ENCODE measurements at regions of chr16 and their contacts with region 1.

Region 1: DNA sequence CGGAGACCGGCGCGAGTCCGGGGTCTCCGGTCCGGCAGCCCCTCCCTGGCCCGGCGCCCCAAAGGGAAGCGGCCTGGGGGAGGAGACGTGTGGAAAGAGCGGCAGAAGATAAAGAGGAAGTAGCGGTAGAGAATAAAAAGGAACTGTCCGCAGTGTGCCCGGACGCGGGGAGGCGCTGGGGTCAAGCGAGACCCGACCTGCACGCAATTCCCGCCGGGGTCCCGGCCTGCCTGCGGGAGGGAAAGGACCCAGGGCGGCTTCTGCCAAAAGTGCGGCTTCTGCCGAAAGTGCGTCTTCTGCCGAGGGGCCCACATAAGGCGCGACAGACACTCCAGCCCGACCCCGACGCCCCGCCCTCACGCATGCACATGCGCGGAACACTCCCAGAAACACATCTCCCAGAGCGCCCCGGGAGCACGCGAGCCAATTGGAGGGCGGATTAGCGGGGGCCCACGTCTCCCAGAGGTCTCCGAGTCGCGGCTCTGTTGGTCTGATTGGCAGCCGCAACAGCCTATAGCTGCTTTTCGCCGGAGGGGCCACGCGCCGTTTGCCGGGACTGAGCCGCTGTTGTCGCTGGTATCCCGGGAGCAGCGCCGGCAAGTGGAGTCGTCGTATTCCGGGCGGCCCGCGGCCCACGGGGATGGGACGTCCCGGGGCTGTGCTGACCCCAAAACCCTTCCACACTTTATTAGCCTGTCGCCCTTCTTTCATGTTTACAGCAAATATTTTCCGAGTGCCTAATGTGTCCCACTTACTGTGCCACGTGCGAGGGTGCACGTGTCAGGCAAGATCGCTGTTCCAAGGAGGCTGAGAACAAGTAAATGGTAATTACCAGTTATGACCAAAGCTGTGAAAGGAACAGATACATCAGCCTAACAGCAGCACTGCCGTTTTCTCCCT is 8.0 kb upstream of the MEFV start:
- DNase-seq: peak; percentile 98
- H3K4me3 ChIP-seq: peak overlapping the region; percentile 74 to 82 (median 77)
- H3K27ac ChIP-seq: peak overlapping the region; percentile 49
- H3K4me1 ChIP-seq: peaks cover 7% of the 10 kb centered on the region
- H3K27me3 ChIP-seq: no peaks in the 10 kb centered on the region
- CTCF ChIP-seq: peak; percentile 7 to 34

Region 2: GRCh38 chr16:3305109-3306068 is 41.0 kb after region 1 on chr16 and contains the starts of genes TIGD7 and ZNF75A:
- CTCF ChIA-PET with region 1: no interaction called
- dilution Hi-C with region 1: no loop called
- in situ Hi-C with region 1: no loop called
- intact Hi-C with region 1: loop called (anchors 2 kb)
- DNase-seq: peak; percentile 87
- H3K4me3 ChIP-seq: peak within 1 kb of the TSS; percentile 60 to 67 (median 62)
- H3K27ac ChIP-seq: peak within 1 kb of the TSS; percentile 45
- H3K4me1 ChIP-seq: peaks cover 6% of the 10 kb centered on the region
- H3K27me3 ChIP-seq: no peaks in the 10 kb centered on the region
- CTCF ChIP-seq: peak in 1 of 2 donors; percentile 17
- total RNA-seq, gene TIGD7: 1.9 to 2.3 TPM
- total RNA-seq, gene ZNF75A: 13.7 to 24.6 TPM

Region 3: GRCh38 chr16:3328643-3329042 is 64.3 kb after region 1 on chr16:
- CTCF ChIA-PET with region 1: no interaction called
- dilution Hi-C with region 1: no loop called
- in situ Hi-C with region 1: no loop called
- intact Hi-C with region 1: no loop called
- DNase-seq: no peak
- H3K4me3 ChIP-seq: no peak overlapping the region
- H3K27ac ChIP-seq: no peak overlapping the region
- H3K4me1 ChIP-seq: no peaks in the 10 kb centered on the region
- H3K27me3 ChIP-seq: no peaks in the 10 kb centered on the region
- CTCF ChIP-seq: no peak

Region 4: DNA sequence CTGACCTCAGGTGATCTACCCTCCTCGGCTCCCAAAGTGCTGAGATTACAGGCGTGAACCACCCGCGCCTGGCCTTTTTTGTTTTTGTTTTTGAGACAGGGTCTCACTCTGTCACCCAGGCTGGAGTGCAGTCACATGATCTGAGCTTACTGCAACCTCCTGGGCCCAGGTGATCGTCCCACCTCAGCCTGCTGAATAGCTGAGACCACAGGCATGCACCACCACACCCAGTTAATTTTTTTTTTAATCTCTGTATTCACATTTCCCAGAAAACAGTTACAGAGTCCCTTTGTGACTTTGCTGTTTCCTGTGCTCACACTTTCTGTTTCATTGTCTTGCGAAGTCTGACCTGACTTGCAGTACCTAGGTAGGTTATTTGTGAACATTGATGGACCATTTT is 239.1 kb after region 1 on chr16:
- CTCF ChIA-PET with region 1: no interaction called
- dilution Hi-C with region 1: no loop called
- in situ Hi-C with region 1: no loop called
- intact Hi-C with region 1: loop called (anchors 5 kb)
- DNase-seq: peak; percentile 62
- H3K4me3 ChIP-seq: no peak overlapping the region
- H3K27ac ChIP-seq: peak overlapping the region; percentile 65
- H3K4me1 ChIP-seq: peaks cover 18% of the 10 kb centered on the region
- H3K27me3 ChIP-seq: no peaks in the 10 kb centered on the region
- CTCF ChIP-seq: no peak

Measured in mammary epithelial cell (primary cell).